ENCODE measurements at regions of chr1 and their contacts with region 1.

Region 1: DNA sequence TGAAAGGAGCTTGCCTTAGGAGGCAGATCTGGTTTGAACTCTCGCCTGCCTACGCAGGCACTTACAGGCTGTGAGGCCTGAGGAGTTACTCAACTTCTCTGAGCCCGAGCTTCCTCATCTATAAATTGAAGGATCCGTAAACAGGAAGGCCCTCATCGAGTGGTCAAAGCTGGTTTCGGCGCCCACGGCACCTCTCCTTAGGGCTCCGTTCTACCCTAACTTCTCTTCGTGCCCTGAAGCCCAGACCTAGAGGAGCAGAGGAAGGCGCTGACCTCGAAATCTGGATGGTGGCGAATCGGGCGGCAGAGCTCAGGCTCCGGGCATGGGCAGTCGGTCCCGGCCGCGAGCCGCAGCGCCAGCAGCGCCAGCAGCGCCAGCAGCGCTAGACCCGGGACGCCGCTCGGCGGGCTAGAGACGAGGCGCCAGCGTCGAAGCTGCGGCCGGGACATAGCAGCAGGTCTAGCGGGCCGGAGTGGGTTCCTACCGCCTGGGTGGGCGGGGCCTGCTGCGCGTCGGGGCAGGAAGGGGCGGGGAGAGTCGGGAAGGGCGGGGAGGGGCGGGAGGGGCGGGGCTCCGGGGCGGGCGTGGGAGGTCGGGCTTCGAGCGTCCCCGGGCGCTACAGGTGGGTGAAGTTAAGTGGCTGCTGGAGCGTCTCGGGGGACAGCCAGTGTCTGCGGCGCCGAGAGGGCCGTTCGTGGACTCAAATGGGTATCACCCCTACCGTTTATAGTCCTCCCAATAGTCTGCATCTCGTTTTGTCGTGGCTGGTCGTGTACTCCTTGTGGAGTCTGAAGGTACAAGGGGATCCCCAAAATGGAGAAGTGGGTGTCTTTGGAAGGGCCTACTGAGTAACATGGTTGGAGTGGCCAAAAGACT is at the start of gene CTBS:
- DNase-seq: peak; percentile 45
- ATAC-seq: peak; percentile 94
- H3K4me3 ChIP-seq: peak within 1 kb of the TSS; percentile 83
- H3K27ac ChIP-seq: peak within 1 kb of the TSS; percentile 99
- H3K4me1 ChIP-seq: no peaks in the 10 kb centered on the region
- H3K27me3 ChIP-seq: no peaks in the 10 kb centered on the region
- CTCF ChIP-seq: 0 out of 6 replicates have a peak, but pooled peaks of 1 of the 3 experiments have one; percentile 1
- EP300 ChIP-seq: no peak
- POLR2A ChIP-seq: peak; percentile 99
- RAD21 ChIP-seq: no peak
- polyA plus RNA-seq, gene CTBS: 4.3 to 9.7 TPM

Region 2: GRCh38 chr1:84478876-84479868 is 95.0 kb before region 1 on chr1 and contains the start of gene RPF1:
- CTCF ChIA-PET with region 1: interaction called, 6 read pairs
- POLR2A ChIA-PET with region 1: interaction called, 15 read pairs
- RAD21 ChIA-PET with region 1: interaction called, 19 read pairs
- SMC1A ChIA-PET with region 1: interaction called, 15 read pairs
- in situ Hi-C with region 1: no loop called
- intact Hi-C with region 1: loop called (anchors 1 kb)
- DNase-seq: peak; percentile 49
- ATAC-seq: peak; percentile 96
- H3K4me3 ChIP-seq: peak within 1 kb of the TSS; percentile 87
- H3K27ac ChIP-seq: peak within 1 kb of the TSS; percentile 80
- H3K4me1 ChIP-seq: no peaks in the 10 kb centered on the region
- H3K27me3 ChIP-seq: no peaks in the 10 kb centered on the region
- CTCF ChIP-seq: no peak
- EP300 ChIP-seq: no peak; a peak in 1 of 4 replicates
- POLR2A ChIP-seq: peak; percentile 78
- RAD21 ChIP-seq: no peak
- polyA plus RNA-seq, gene RPF1: 45.0 to 45.5 TPM

Region 3: GRCh38 chr1:84506002-84506728 is 68.0 kb before region 1 on chr1 and contains the starts of genes GNG5 and SPATA1:
- CTCF ChIA-PET with region 1: interaction called, 8 read pairs
- POLR2A ChIA-PET with region 1: interaction called, 60 read pairs
- RAD21 ChIA-PET with region 1: interaction called, 26 read pairs
- SMC1A ChIA-PET with region 1: interaction called, 16 read pairs
- in situ Hi-C with region 1: no loop called
- intact Hi-C with region 1: loop called (anchors 1 kb)
- DNase-seq: peak; percentile 85
- ATAC-seq: peak; percentile 89
- H3K4me3 ChIP-seq: peak within 1 kb of the TSS; percentile 85
- H3K27ac ChIP-seq: peak within 1 kb of the TSS; percentile 91
- H3K4me1 ChIP-seq: no peaks in the 10 kb centered on the region
- H3K27me3 ChIP-seq: no peaks in the 10 kb centered on the region
- CTCF ChIP-seq: no peak
- EP300 ChIP-seq: peak in 1 of 2 experiments; percentile 24; a peak in 1 of 4 replicates
- POLR2A ChIP-seq: peak; percentile 85
- RAD21 ChIP-seq: no peak
- polyA plus RNA-seq, gene GNG5: 296 to 323 TPM
- polyA plus RNA-seq, gene SPATA1: 0.74 to 1.5 TPM

Region 4: DNA sequence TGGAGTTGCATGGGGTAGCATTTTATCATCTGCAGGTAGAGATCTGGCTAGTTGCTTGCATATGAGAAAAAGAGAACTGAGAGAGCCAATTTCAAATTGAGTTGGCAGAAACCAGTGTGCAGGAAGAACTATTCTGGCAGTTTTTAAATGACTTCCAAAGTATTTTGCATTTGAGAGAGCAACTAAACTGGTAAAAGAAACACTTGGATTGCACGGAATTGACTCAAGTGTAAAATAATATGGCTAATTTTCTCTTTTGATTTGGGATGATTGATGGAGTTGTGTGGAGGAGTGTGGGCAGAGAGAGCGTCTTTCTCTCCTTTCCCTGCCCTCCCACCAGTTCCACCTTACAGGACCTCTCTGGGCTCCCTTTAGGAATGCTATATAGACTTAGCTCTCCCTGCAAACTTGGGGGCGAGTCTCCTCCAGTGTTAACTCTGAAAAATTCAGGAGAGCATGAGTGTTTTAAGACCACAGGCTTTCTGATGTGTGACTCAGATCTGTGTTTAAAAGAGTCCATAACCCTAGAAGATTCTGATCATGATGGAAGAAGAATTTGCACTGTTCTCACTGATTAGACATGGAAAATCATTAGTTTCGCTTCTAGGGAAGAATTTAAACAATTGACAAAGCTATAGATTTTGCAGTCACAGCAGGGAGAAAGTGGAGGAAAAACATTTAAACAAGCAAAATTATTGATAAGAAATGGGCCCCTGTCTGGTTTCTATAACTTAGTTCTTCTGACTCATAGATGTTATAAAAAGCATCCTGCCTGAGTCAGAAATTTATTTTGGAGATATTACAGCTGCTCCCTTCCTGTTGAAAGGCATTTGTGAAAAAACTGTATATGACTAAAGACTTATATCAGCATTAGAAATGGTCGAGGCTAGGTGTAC is 24.9 kb after region 1 on chr1:
- CTCF ChIA-PET with region 1: no interaction called
- POLR2A ChIA-PET with region 1: interaction called, 12 read pairs
- RAD21 ChIA-PET with region 1: interaction called, 3 read pairs
- SMC1A ChIA-PET with region 1: interaction called, 3 read pairs
- in situ Hi-C with region 1: no loop called
- intact Hi-C with region 1: no loop called
- DNase-seq: peak; percentile 51
- ATAC-seq: peak; percentile 90
- H3K4me3 ChIP-seq: peak overlapping the region; percentile 6; the same call in 1 of the 2 replicates
- H3K27ac ChIP-seq: peak overlapping the region; percentile 92
- H3K4me1 ChIP-seq: peaks cover 28% of the 10 kb centered on the region
- H3K27me3 ChIP-seq: no peaks in the 10 kb centered on the region
- CTCF ChIP-seq: no peak
- EP300 ChIP-seq: peak in 1 of 2 experiments; percentile 15; a peak in 1 of 4 replicates
- POLR2A ChIP-seq: no peak
- RAD21 ChIP-seq: peak; percentile 7; the same call in 1 of the 2 replicates

Region 5: DNA sequence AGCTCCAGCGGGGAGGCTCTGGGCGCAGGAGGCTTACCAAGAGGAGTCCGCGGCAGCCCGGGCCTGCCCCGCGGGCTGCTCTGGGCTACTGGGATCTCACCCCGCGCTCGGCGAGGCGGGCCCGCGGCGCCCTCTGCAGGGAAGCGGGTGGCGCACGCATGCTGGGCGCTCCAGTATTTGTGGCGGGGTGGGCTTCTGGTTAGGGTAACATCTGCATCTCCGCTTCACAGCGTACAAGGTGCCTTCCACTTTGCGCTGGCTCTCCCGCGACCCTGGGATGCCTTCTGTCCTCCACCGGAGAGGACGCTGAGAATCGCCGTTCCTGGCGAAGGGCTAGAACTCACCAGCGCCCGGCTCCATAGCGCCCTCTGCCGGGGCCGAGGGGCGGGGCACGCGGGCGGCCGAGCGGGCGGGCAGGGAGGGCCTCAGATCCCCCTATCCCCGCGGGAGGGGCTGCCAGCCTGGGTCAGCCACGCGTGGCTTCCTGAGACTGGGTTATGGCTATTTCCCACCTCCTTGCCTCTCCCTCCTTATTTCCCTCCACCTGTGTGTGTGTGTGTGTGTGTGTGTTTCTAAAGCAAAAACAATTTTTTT is 46.6 kb after region 1 on chr1:
- CTCF ChIA-PET with region 1: interaction called, 14 read pairs
- POLR2A ChIA-PET with region 1: interaction called, 3 read pairs
- RAD21 ChIA-PET with region 1: interaction called, 4 read pairs
- SMC1A ChIA-PET with region 1: interaction called, 5 read pairs
- in situ Hi-C with region 1: no loop called
- intact Hi-C with region 1: loop called (anchors 2 kb)
- DNase-seq: peak; percentile 38
- ATAC-seq: peak; percentile 98
- H3K4me3 ChIP-seq: peak overlapping the region; percentile 78
- H3K27ac ChIP-seq: peak overlapping the region; percentile 47
- H3K4me1 ChIP-seq: no peaks in the 10 kb centered on the region
- H3K27me3 ChIP-seq: no peaks in the 10 kb centered on the region; a peak in 1 of 4 replicates
- CTCF ChIP-seq: peak; percentile 64 to 79 (median 73)
- EP300 ChIP-seq: no peak
- POLR2A ChIP-seq: peak; percentile 44
- RAD21 ChIP-seq: peak; percentile 85

Region 6: GRCh38 chr1:84996846-84997666 is 422.9 kb after region 1 on chr1 and contains the start of gene MCOLN2:
- CTCF ChIA-PET with region 1: interaction called, 6 read pairs
- POLR2A ChIA-PET with region 1: no interaction called
- RAD21 ChIA-PET with region 1: no interaction called
- SMC1A ChIA-PET with region 1: no interaction called
- in situ Hi-C with region 1: no loop called
- intact Hi-C with region 1: loop called (anchors 10 kb)
- DNase-seq: no peak
- ATAC-seq: peak; percentile 71
- H3K4me3 ChIP-seq: peak within 1 kb of the TSS; percentile 95
- H3K27ac ChIP-seq: peak within 1 kb of the TSS; percentile 99
- H3K4me1 ChIP-seq: 0 out of 2 replicates have a peak, but pooled peaks cover 4% of the 10 kb centered on the region
- H3K27me3 ChIP-seq: no peaks in the 10 kb centered on the region
- CTCF ChIP-seq: 0 out of 6 replicates have a peak, but pooled peaks of 1 of the 3 experiments have one; percentile 4
- EP300 ChIP-seq: no peak
- POLR2A ChIP-seq: peak; percentile 86
- RAD21 ChIP-seq: no peak
- polyA plus RNA-seq, gene MCOLN2: 25.9 to 46.7 TPM

Region 7: GRCh38 chr1:85276215-85276977 is 702.2 kb after region 1 on chr1 and contains the start of gene BCL10:
- CTCF ChIA-PET with region 1: no interaction called
- POLR2A ChIA-PET with region 1: interaction called, 11 read pairs
- RAD21 ChIA-PET with region 1: no interaction called
- SMC1A ChIA-PET with region 1: no interaction called
- in situ Hi-C with region 1: loop called (anchors 10 kb)
- intact Hi-C with region 1: no loop called
- DNase-seq: peak; percentile 97
- ATAC-seq: peak; percentile 97
- H3K4me3 ChIP-seq: peak within 1 kb of the TSS; percentile 87
- H3K27ac ChIP-seq: peak within 1 kb of the TSS; percentile 94
- H3K4me1 ChIP-seq: peaks cover 4% of the 10 kb centered on the region
- H3K27me3 ChIP-seq: no peaks in the 10 kb centered on the region
- CTCF ChIP-seq: no peak
- EP300 ChIP-seq: no peak
- POLR2A ChIP-seq: peak; percentile 83
- RAD21 ChIP-seq: no peak
- polyA plus RNA-seq, gene BCL10: 16.7 to 19.0 TPM